Adrenal gland (tissue), 19 donors: ENCODE measurements at regions of chr2 and their contacts with region 1.

Region 1: GRCh38 chr2:33372940-33373553 is 103.4 kb upstream of the RASGRP3 start:
- DNase-seq: peak in 4 of 7 donors; percentile 27 to 44 (median 36)
- H3K4me3 ChIP-seq: no peak overlapping the region
- H3K27ac ChIP-seq: no peak overlapping the region
- H3K4me1 ChIP-seq: peaks cover 0 to 3% of the 10 kb centered on the region in 2 donors
- H3K27me3 ChIP-seq: no peaks in the 10 kb centered on the region
- CTCF ChIP-seq: peak; percentile 71 to 88 (median 77)
- POLR2A ChIP-seq: no peak

Region 2: GRCh38 chr2:32772638-32773447 is 600.2 kb before region 1 on chr2:
- intact Hi-C with region 1: loop called in 1 of 2 experiments (anchors 10 kb)
- DNase-seq: peak in 4 of 7 donors; percentile 14 to 24 (median 19)
- H3K4me3 ChIP-seq: no peak overlapping the region
- H3K27ac ChIP-seq: no peak overlapping the region
- H3K4me1 ChIP-seq: no peaks in the 10 kb centered on the region
- H3K27me3 ChIP-seq: no peaks in the 10 kb centered on the region
- CTCF ChIP-seq: peak; percentile 64 to 80 (median 71)
- POLR2A ChIP-seq: no peak

Region 3: DNA sequence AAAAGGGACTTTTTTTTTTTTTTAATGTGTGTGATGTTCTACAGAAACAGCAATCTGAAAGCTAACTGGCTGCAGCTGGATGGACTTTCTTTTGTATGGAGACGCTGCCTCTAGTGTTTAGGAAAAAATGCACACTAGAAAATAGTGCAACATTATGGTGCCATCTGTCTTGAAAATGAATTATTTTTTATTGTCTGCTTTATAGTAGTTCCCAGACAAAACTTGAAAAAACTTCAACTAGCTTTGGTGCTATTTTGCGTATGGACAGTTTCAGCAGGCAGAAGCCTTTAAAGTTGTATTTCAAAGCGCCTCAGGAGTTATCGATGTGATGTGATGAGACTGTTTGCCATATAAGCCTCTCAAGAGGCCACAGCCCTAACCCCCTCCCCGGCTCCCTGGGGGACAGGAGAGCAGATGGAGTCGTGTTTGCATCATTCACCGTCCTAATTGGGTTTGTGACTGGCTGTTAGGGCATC is 339.4 kb before region 1 on chr2:
- intact Hi-C with region 1: loop called in 1 of 2 experiments (anchors 10 kb)
- DNase-seq: peak in 1 of 7 donors; percentile 14
- H3K4me3 ChIP-seq: peak overlapping the region in 1 of 4 donors; percentile 2
- H3K27ac ChIP-seq: no peak overlapping the region
- H3K4me1 ChIP-seq: no peaks in the 10 kb centered on the region
- H3K27me3 ChIP-seq: no peaks in the 10 kb centered on the region
- CTCF ChIP-seq: peak in 5 of 6 experiments; percentile 43 to 58 (median 56)
- POLR2A ChIP-seq: no peak